Pancreas (tissue), 10 donors: ENCODE measurements at regions of chr10 and their contacts with region 1.

Region 1: GRCh38 chr10:71569775-71570588 is 149.6 kb downstream of the C10orf105 start:
- DNase-seq: peak in 5 of 6 donors; percentile 45 to 88 (median 74)
- ATAC-seq: peak; percentile 50 to 90 (median 80)
- H3K4me3 ChIP-seq: no peak overlapping the region
- H3K27ac ChIP-seq: no peak overlapping the region
- H3K4me1 ChIP-seq: no peaks in the 10 kb centered on the region
- H3K27me3 ChIP-seq: no peaks in the 10 kb centered on the region
- CTCF ChIP-seq: peak; percentile 67 to 81 (median 73)

Region 2: DNA sequence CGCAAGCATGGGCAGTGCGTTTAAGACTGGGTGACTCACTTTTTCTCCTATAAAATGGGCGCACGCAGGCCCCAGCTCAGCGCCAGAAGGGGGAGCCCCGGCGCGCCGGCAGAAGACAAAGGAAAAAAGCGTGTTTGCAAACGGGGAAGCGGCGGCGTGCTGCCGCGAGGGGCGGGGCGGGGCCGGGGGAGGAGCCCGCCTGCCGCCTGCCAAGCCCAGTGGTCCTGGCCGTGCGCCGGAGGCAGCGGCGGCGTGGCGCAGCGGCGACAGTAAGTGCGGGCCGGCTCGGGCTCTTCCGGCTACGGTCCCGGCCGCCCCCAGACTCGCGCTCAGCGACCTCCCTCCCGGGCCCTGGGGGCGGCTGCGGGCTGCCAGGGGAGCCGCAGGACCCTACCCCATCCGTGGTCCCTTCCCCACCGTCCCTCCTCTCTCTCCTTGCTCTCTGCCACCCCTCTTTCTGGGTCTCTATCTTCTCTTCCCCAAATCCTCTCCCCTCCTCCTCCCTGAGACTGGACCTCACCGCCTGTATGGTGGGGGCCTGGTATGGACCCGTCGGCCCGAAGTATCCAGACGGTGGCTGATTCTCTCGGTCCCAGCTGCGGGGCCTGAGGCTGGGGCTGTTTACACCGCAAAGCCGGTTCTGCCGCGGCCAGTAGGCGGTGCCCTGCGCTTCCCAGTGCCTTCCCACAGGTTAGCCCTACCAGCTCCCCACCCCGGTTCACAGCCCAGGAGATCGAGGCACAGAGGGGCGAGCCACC is 250.8 kb before region 1 on chr10 and contains the start of gene SLC29A3:
- intact Hi-C with region 1: loop called in 2 of 3 experiments (anchors 10 kb)
- DNase-seq: peak; percentile 75 to 92 (median 83)
- ATAC-seq: peak; percentile 94 to 96 (median 95)
- H3K4me3 ChIP-seq: peak within 1 kb of the TSS; percentile 57 to 87 (median 78)
- H3K27ac ChIP-seq: peak within 1 kb of the TSS in 2 of 4 donors; percentile 59 to 67
- H3K4me1 ChIP-seq: peaks cover 0 to 6% (median 0%) of the 10 kb centered on the region in 3 donors
- H3K27me3 ChIP-seq: no peaks in the 10 kb centered on the region
- CTCF ChIP-seq: peak; percentile 14 to 42 (median 26)
- total RNA-seq, gene SLC29A3: 2.2 to 7.0 (median 3.6) TPM

Region 3: DNA sequence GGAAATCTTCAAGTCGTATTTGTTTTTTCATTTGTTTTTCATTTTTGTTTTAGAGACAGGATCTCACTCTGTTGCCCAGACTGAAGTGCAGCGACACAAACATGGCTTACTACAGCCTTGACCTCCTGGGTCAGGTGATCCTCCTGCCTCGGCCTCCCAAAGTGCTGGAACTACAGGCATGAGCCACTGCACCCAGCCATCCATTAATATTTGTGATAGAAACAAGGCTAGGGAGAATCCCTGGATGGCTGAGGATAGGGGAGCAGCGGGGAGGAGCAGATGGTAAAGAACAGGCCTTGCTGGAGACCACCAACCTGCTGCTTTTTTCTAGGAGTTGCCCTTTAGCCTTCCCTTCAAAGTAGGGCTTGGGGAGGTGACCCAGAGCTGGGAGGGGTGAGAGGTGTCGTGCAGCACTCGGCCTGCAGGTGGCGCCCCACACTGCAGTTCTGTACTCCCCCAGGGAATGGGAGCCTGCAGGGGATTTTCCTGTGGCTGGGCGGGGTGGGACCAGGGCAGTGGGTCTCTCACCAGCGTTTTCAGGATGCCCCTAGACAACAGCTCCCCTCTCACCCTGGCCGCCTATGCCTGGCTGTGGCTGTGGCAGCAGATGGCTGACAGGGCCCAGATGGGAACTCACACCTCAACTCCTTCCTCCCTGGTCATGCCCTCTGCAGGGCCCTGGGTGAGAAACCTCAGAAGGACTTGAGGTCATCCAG is 185.9 kb before region 1 on chr10:
- intact Hi-C with region 1: loop called in 1 of 3 experiments (anchors 5 kb)
- DNase-seq: peak; percentile 31 to 92 (median 72)
- ATAC-seq: peak; percentile 84 to 99 (median 96)
- H3K4me3 ChIP-seq: no peak overlapping the region
- H3K27ac ChIP-seq: no peak overlapping the region
- H3K4me1 ChIP-seq: no peaks in the 10 kb centered on the region
- H3K27me3 ChIP-seq: no peaks in the 10 kb centered on the region
- CTCF ChIP-seq: peak; percentile 76 to 92 (median 89)

Region 4: DNA sequence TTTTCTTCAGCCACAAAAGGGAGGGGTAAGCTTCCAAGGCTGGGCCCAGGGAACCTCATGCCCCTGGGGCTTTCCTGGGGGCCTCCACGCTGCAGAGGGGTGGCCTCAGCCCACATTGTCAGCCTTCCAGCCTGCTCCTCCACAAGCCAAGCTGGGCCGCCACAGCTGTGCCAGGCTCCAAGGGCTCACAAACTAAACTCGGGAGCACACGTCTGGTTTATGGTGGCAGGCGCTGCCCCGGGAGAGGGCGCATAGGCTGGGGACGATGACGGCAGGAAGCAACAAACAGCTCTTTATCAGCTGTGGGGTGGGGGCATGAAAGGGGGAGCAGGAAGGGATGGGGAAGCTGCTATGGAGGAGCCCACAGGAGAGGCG is 179.5 kb before region 1 on chr10:
- intact Hi-C with region 1: loop called in 2 of 3 experiments (anchors 5 kb)
- DNase-seq: no peak
- ATAC-seq: no peak
- H3K4me3 ChIP-seq: no peak overlapping the region
- H3K27ac ChIP-seq: no peak overlapping the region
- H3K4me1 ChIP-seq: no peaks in the 10 kb centered on the region
- H3K27me3 ChIP-seq: no peaks in the 10 kb centered on the region
- CTCF ChIP-seq: no peak

Region 5: DNA sequence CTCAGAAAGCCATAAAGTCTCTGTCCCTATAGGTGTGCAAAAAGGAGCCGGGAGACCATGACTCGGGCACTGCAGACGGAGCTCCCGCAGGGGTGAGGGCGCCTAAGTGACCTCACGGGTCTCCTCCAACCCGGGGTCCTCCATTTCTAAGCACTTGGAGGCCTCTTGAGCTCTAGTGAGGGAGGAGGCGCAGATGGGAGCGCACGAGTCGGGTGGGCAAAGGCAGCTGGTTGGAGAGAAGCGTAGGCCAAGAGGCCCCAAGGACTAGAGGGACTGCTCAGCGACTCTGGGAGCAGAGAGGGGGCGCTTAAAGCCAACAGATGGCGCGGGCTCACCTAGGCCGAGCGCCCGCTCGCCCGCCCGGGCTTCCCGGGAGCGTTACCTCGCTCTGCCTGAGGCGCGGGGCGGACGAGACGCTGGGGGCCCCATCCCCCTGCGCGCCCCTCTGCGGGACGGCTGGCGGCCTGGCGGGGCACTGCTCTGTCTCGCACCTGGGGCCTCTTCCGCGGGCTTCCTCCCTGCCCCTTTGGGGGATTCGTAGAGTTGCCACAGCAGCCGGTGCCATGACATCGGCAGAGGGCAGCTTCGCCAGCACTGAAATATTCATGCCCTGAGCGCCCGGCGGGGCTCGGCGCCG is 173.8 kb before region 1 on chr10:
- intact Hi-C with region 1: loop called in 2 of 3 experiments (anchors 5 kb)
- DNase-seq: peak; percentile 39 to 72 (median 57)
- ATAC-seq: peak; percentile 79 to 88 (median 86)
- H3K4me3 ChIP-seq: peak overlapping the region in 3 of 4 donors; percentile 8 to 51 (median 38)
- H3K27ac ChIP-seq: no peak overlapping the region
- H3K4me1 ChIP-seq: peaks cover 0 to 10% (median 5%) of the 10 kb centered on the region in 3 donors
- H3K27me3 ChIP-seq: peaks cover 0 to 3% (median 0%) of the 10 kb centered on the region in 4 donors
- CTCF ChIP-seq: peak in 2 of 4 donors; percentile 30 to 36

Region 6: DNA sequence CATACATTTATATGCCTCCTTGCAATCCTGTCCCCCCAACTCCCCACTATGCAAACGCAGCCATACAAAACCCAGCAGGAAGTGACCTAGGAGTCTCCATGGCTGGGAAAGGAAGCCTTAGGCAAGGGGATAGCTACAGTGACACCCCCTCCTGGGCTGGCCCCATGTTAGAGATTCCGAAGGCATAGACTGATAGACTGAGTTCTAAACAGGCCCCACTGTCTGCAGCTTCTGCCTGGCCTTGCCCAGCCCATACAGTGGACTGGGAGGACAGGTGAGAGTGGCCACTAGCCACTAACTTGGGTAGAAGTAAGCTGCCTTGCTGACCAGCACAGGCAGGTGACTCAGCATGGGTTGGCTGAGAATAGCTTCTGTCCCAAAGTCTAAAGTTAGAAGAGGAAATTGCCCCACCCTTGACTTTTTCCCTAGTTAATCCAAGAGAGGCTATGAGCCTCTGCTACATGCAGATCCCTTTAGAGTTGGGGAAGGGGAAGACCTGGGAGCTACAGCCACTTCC is 43.3 kb after region 1 on chr10:
- intact Hi-C with region 1: no loop called
- DNase-seq: no peak
- ATAC-seq: peak in 2 of 4 donors; percentile 37 to 44
- H3K4me3 ChIP-seq: no peak overlapping the region
- H3K27ac ChIP-seq: no peak overlapping the region
- H3K4me1 ChIP-seq: no peaks in the 10 kb centered on the region
- H3K27me3 ChIP-seq: no peaks in the 10 kb centered on the region
- CTCF ChIP-seq: no peak